MCF 10A (cell line): ENCODE measurements at regions of chr3 and their contacts with region 1.

Region 1: GRCh38 chr3:194134757-194135528 is 1.0 kb upstream of the HES1 start:
- DNase-seq: peak; percentile 98
- H3K4me3 Mint-ChIP-seq: peak overlapping the region; percentile 97
- H3K27ac Mint-ChIP-seq: peak overlapping the region; percentile 73
- H3K4me1 Mint-ChIP-seq: peaks cover 24% of the 10 kb centered on the region
- H3K27me3 Mint-ChIP-seq: no peaks in the 10 kb centered on the region
- CTCF ChIP-seq: no peak

Region 2: DNA sequence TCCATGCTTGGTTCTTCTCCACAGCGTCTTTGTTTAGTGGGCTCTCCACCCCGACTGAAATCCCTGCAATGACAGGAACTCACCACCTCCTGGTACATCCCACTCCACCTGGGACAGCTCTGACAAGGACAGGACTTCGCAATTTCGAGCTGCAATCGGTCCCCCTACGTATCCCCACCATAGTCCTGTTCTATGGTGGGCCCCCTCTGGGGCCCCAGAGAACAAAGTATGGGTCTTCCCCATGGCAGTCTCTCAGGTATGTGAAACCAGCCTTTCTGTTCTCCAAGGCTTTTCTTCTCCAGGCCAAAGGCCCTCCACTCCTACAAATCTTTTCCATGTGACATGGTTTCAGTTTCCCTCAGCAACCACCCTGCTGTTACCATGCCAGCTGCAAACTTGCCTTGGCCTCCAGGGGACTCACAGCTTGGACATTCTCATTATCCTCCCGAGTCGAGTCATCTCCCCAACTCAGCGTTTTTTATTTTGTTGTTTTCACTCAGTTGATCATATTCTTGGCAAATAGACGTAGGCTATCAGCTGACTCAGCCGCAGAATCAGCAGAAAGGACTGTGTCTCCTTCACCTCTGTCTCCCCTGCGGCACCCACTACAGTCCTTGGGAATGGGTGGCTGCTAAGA is 308.7 kb before region 1 on chr3:
- CTCF ChIA-PET with region 1: interaction called, 7 read pairs
- POLR2A ChIA-PET with region 1: interaction called, 57 read pairs
- intact Hi-C with region 1: loop called (anchors 1 kb)
- DNase-seq: peak; percentile 81
- H3K4me3 Mint-ChIP-seq: peak overlapping the region; percentile 7
- H3K27ac Mint-ChIP-seq: peak overlapping the region; percentile 90
- H3K4me1 Mint-ChIP-seq: peaks cover 34% of the 10 kb centered on the region
- H3K27me3 Mint-ChIP-seq: no peaks in the 10 kb centered on the region
- CTCF ChIP-seq: no peak

Region 3: DNA sequence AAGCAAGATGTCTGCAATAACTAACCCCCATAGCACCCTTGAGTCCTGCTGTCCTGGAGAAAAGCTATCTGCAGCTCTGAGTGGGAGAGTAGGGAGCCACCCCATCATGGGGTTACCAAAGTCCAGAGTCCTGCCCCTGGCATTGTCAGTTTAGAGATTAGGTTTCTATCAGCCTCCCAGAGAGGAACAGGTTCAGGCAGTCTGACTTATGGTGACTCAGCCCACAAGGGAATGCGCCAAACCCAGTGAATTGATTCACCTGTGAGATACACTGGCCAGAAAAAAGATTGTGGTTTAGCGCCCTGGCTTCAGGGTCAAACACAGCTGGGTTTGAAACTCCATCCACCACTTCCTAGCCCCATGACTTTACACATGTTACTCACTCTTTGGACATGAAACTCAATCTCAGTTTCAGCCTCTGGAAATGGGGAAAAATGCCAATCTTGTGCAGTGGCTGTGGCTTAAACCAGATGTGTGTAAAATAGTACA is 262.6 kb before region 1 on chr3:
- CTCF ChIA-PET with region 1: no interaction called
- POLR2A ChIA-PET with region 1: interaction called, 89 read pairs
- intact Hi-C with region 1: loop called (anchors 1 kb)
- DNase-seq: peak; percentile 99
- H3K4me3 Mint-ChIP-seq: no peak overlapping the region
- H3K27ac Mint-ChIP-seq: peak overlapping the region; percentile 27
- H3K4me1 Mint-ChIP-seq: peaks cover 68% of the 10 kb centered on the region
- H3K27me3 Mint-ChIP-seq: peaks cover 12% of the 10 kb centered on the region
- CTCF ChIP-seq: no peak

Region 4: DNA sequence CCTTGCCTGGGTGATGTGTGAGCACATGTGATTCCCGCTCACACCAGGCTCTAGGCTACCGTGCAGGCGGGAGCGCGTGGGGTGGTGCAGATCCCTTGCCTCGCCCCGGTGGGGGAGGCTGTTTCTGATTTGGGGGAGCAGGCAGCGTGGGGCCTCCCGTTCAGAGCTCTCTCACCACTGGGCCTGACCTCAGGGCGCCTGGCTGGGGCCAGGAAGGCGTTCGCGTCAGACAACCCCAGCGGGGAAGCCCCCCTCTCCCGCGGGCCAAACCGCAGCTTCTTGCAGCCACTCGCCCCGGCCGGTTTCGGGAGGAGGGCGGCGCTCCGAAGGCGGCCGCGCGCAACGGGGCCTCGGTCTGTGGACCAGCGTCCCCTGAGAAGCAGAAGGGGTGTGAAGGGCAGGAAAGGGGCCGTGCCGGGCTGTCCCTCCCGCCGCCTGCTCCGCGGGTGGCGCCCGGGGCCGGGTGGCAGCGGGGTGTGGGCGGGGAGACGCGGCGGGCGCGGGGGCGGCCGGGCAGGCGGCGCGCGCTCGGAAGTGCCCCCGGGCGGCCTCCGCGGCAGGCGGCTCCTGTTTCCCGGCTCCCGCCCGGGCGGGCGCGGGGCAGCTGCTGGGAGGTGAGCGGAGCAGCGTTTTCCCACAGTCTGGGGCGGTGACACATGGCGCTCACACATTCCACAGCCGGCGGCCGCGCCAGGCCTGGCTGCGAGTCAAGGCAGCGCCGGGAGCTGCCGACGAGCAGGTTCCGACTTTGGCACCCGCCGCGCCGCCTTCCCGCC is 64.1 kb before region 1 on chr3:
- CTCF ChIA-PET with region 1: interaction called, 3 read pairs
- POLR2A ChIA-PET with region 1: interaction called, 42 read pairs
- intact Hi-C with region 1: loop called (anchors 2 kb)
- DNase-seq: peak; percentile 96
- H3K4me3 Mint-ChIP-seq: peak overlapping the region; percentile 67
- H3K27ac Mint-ChIP-seq: no peak overlapping the region
- H3K4me1 Mint-ChIP-seq: peaks cover 17% of the 10 kb centered on the region
- H3K27me3 Mint-ChIP-seq: no peaks in the 10 kb centered on the region
- CTCF ChIP-seq: no peak

Region 5: DNA sequence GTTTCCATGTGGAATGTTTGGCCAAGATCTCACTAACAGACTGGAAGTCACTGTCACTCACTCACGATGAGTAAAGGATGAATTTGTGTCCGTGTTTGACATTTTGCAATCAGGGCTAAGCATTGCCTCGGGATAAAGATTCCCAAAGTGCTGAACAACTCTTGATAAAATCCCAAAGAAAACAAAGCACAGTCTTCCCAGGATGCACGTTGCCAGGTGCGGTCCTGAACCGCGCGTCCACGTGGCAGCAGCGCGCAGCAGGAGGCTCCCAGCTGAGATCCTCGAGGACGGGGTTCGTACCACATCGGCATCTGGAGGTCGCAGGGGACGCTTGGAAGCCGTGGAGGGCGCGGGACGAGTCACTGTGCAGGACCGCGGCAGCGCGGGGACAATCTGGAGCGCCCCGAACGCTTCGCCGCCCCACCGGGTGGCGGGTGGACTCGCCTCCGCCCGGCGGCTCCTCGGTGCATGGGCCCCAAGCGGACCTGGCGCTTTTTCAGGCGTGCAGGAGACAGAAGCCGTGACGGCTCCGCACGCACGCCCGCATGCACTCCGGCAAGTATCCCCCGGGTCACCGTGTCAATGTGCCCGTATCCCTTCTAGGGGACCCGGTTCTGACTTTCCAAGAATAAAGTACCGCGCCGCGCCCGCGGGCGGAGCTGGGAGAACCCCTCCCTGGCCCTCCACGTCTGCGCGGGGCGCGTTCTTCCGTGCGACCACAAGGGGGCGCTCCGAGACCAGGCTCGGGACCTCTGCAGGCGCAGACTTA is 198.5 kb after region 1 on chr3:
- CTCF ChIA-PET with region 1: no interaction called
- POLR2A ChIA-PET with region 1: interaction called, 20 read pairs
- intact Hi-C with region 1: no loop called
- DNase-seq: peak; percentile 97
- H3K4me3 Mint-ChIP-seq: peak overlapping the region; percentile 77
- H3K27ac Mint-ChIP-seq: peak overlapping the region; percentile 90
- H3K4me1 Mint-ChIP-seq: peaks cover 28% of the 10 kb centered on the region
- H3K27me3 Mint-ChIP-seq: no peaks in the 10 kb centered on the region
- CTCF ChIP-seq: peak; percentile 97